ENCODE measurements at regions of chr17 and their contacts with region 1.

Region 1: DNA sequence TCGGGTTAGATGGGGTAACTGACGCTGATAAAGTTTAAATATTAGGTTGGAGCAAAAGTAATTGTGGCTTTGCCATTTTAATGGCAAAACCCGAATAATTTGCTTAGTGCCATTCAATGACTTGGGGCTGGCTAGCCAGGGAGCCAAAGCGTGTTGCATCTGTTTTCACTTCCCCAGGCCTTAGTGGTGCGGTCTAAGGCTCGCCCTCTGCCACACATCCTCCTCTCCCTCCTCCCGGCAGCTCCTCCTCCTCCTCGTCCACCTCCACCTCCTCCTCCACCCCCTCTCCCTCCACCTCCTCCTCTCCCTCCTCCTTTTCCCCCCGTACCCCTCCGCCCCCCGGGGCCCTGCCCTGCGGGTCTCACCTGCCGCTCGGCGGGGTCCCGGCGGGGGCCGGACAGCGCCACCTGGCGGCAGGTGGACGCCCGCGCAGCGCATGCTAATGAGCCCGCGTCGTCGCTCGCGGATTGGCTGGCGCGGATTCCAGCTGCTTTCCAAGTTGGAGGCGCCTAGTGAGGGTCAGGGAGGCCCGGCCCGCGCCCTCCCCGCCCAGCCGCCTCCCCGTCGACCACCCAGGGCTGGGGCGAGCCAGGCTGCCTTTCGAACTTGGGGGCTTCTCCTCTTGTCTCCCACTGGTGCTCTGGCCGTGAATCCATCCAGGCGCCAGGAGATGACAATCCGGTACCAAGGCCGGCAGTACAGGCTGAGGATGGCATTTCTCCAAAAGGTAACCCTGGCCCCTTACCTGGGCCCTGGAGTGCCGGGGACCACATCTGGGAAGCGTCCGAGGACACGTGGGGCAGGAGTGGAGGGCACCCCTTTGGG is 36.6 kb upstream of the RGS9 start:
- DNase-seq: peak; percentile 91
- H3K4me3 ChIP-seq: peak overlapping the region; percentile 49
- H3K27ac ChIP-seq: peak overlapping the region; percentile 72
- H3K4me1 ChIP-seq: no peaks in the 10 kb centered on the region
- H3K27me3 ChIP-seq: no peaks in the 10 kb centered on the region
- CTCF ChIP-seq: peak; percentile 75

Region 2: GRCh38 chr17:64950871-64951270 is 149.7 kb before region 1 on chr17:
- intact Hi-C with region 1: no loop called
- DNase-seq: no peak
- H3K4me3 ChIP-seq: no peak overlapping the region
- H3K27ac ChIP-seq: no peak overlapping the region
- H3K4me1 ChIP-seq: no peaks in the 10 kb centered on the region
- H3K27me3 ChIP-seq: no peaks in the 10 kb centered on the region
- CTCF ChIP-seq: no peak

Region 3: GRCh38 chr17:64984851-64985521 is 115.5 kb before region 1 on chr17:
- intact Hi-C with region 1: loop called (anchors 10 kb)
- DNase-seq: no peak
- H3K4me3 ChIP-seq: no peak overlapping the region
- H3K27ac ChIP-seq: peak overlapping the region; percentile 61
- H3K4me1 ChIP-seq: no peaks in the 10 kb centered on the region
- H3K27me3 ChIP-seq: no peaks in the 10 kb centered on the region
- CTCF ChIP-seq: no peak

Region 4: DNA sequence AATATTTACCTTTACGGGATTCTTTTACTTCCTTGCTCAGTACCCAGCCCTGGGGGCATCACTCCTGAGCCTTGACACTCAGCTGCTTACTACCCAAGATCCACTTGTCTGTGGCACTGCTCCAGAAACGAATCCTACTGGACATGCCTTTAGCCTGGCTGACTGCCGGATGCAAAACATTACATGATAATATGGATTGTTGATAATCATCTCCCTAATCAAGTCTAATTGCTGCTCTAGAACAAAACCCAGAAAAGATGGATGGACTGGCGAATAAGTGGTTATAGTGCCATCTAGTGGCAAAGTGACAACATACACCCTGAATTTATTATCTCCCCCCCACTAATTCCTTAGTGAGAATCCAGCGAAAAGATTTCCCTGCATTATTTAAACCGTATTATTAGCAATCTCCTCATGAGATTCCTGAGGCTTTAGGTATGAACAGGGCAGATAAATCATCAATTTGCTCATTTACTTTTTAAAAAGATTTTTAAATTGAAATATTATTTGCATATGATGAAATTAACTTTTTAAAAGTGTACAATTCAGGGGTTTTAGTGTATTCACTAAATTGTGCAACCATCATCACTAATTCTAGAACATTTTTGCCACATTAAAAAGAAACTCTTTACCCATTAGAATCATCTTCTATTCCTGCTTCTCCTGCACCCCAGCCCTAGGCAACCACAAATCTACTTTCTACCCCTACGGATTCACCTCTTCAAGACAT is 98.3 kb after region 1 on chr17:
- intact Hi-C with region 1: loop called (anchors 10 kb)
- DNase-seq: no peak
- H3K4me3 ChIP-seq: no peak overlapping the region
- H3K27ac ChIP-seq: no peak overlapping the region
- H3K4me1 ChIP-seq: no peaks in the 10 kb centered on the region
- H3K27me3 ChIP-seq: no peaks in the 10 kb centered on the region
- CTCF ChIP-seq: peak; percentile 69

Measured in colonic mucosa (tissue), 4 donors.